Breast epithelium (tissue), 4 donors: ENCODE measurements at regions of chr16 and their contacts with region 1.

Region 1: GRCh38 chr16:47732523-47733111 is 271.5 kb downstream of the PHKB start:
- DNase-seq: no peak
- H3K4me3 ChIP-seq: no peak overlapping the region
- H3K27ac ChIP-seq: no peak overlapping the region
- H3K4me1 ChIP-seq: no peaks in the 10 kb centered on the region
- H3K27me3 ChIP-seq: no peaks in the 10 kb centered on the region
- CTCF ChIP-seq: no peak
- POLR2A ChIP-seq: no peak

Region 2: GRCh38 chr16:49419006-49419405 is 1686.4 kb after region 1 on chr16:
- intact Hi-C with region 1: loop called (anchors 10 kb)
- DNase-seq: no peak
- H3K4me3 ChIP-seq: no peak overlapping the region
- H3K27ac ChIP-seq: no peak overlapping the region
- H3K4me1 ChIP-seq: no peaks in the 10 kb centered on the region
- H3K27me3 ChIP-seq: no peaks in the 10 kb centered on the region
- CTCF ChIP-seq: no peak
- POLR2A ChIP-seq: no peak